Activated CD4-positive, alpha-beta memory T cell treated with anti-CD3 and anti-CD28 coated beads for 36 hours (primary cell): ENCODE measurements at regions of chr12 and their contacts with region 1.

Region 1: DNA sequence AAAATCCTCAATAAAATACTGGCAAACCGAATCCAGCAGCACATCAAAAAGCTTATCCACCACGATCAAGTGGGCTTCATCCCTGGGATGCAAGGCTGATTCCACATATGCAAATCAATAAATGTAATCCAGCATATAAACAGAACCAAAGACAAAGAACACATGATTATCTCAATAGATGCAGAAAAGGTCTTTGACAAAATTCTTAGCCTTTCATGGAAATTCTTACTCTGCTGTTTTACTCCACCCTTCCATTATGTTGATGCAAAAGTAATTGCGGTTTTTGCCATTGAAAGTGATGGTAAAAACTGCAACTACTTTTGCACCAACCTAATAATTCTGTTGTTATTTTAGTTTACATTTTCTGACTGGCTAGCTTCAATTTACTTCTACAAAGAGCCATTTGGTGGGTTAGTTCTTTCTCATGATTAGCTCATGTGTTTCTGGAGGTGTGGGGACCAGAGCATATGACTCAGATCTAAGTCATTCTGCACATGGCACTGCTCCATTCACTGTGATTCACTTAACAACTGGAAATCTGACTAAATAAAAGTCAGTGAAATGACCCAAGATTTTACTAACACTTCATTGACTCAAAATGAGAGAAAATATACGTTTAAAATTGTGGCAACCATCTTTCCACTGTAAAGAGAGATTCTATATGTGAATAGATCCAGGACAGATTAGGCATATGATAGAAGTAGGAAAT is 99.9 kb downstream of the TMTC3 start:
- DNase-seq: peak; percentile 54
- H3K4me3 Mint-ChIP-seq: no peak overlapping the region
- H3K27ac Mint-ChIP-seq: peak overlapping the region; percentile 83
- H3K4me1 Mint-ChIP-seq: peaks cover 35% of the 10 kb centered on the region
- H3K27me3 Mint-ChIP-seq: peaks cover 13% of the 10 kb centered on the region

Region 2: GRCh38 chr12:88156075-88156654 is 85.9 kb before region 1 on chr12:
- CTCF ChIA-PET with region 1: no interaction called
- POLR2A ChIA-PET with region 1: no interaction called
- intact Hi-C with region 1: loop called (anchors 5 kb)
- DNase-seq: no peak
- H3K4me3 Mint-ChIP-seq: no peak overlapping the region
- H3K27ac Mint-ChIP-seq: no peak overlapping the region
- H3K4me1 Mint-ChIP-seq: peaks cover 11% of the 10 kb centered on the region
- H3K27me3 Mint-ChIP-seq: no peaks in the 10 kb centered on the region

Region 3: DNA sequence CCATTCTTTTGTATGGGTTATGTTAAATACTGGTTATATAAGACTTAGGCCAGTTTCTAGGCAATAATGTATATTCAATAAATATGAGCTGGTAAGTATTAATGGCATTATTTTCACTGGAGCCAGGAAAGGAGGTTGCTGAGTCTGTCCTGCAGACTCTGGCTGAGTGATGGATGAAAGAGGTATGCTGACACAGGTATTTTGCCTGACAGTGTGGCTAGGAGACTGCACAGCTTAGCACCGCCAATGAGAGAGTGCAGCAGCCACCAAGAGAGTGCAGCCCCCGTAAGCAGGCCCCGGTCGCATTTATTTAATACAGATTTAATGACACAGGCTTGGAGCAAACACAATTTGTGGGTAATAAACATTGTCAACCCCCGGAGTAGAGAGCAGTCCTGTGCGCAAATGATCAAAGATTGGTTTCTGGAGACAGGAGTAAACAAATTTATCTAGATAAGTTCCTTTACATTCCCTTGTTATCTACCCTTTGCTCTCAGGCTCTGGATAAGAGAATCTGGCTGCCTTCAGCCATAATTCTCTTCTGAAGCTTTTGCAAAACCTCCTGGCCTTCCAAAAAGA is 62.5 kb before region 1 on chr12:
- CTCF ChIA-PET with region 1: no interaction called
- POLR2A ChIA-PET with region 1: interaction called, 6 read pairs
- intact Hi-C with region 1: loop called (anchors 5 kb)
- DNase-seq: no peak
- H3K4me3 Mint-ChIP-seq: no peak overlapping the region
- H3K27ac Mint-ChIP-seq: no peak overlapping the region
- H3K4me1 Mint-ChIP-seq: peaks cover 3% of the 10 kb centered on the region
- H3K27me3 Mint-ChIP-seq: no peaks in the 10 kb centered on the region

Region 4: DNA sequence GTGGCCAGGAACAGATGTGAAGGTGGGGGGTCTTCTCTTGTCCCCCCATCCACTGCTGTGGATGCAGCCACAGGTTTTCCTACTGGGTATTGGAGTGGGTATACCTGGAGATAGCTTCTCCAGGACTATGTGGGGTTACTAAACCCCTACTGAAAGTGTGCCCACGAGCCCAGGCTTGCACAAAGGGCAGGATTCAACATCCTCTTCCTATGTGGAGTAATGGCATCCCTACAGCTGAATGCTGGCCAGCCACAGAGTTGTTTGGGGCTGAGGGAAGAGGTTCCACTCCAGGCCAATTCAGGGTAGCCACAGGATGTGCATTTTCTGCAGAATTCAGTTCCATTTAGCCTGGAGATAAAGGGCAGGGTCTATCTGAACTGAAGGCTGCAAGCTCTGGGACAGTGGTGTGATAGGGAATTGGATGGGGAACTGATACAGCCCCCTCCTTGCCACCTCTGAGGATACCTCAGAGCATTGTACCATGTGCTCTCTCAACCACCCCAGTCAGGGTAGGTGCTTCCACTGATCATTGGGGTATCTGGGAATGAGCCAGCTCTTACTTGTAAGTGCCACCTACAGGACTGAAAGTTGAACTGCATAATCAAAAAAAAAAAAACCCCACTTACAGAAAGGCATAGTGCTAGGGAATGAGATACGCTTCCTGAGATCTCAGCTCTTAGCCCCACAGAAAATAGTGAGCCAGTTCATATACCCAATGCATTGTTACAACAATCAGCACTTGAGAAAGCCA is 151.2 kb after region 1 on chr12:
- CTCF ChIA-PET with region 1: no interaction called
- POLR2A ChIA-PET with region 1: no interaction called
- intact Hi-C with region 1: loop called (anchors 1 kb)
- DNase-seq: no peak
- H3K4me3 Mint-ChIP-seq: no peak overlapping the region
- H3K27ac Mint-ChIP-seq: no peak overlapping the region
- H3K4me1 Mint-ChIP-seq: peaks cover 5% of the 10 kb centered on the region
- H3K27me3 Mint-ChIP-seq: peaks cover 2% of the 10 kb centered on the region

Region 5: DNA sequence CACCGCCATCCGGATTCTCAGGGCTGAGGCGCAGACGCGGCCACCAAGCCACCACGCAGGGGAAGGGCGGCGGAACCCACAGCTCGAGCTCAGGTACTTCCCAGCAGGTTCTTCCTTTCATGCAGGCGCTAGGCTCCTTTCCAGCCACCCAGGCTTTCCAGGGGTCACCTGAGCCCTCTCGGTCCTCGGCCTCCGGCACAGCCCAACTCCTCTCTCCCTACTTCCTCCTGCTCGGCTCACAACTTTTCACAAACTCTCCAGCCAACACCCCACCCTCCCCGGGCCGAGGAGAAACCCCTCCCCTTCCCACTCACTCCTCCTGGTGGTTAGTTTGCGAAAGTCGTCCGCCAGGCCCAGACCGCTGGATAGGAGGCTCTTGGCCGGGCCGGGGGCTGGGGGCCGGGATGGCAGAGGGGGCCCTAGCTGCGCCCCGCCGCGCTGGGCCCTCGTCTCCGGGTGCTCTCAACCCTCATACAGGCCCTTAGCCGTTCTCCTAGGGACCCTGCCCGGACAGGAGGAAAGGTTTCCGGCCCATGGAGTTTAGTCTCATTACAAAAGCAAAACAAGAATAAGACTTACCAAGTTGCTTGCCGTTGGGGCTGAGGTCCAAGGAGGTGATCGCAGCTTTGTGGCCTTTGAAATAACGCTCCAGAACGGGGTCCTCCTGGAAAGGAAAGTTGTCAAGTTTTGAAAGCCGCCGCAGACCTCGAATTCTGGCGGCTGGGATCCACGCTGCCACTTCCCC is 1282.7 kb after region 1 on chr12 and contains the start of gene GALNT4:
- CTCF ChIA-PET with region 1: no interaction called
- POLR2A ChIA-PET with region 1: no interaction called
- intact Hi-C with region 1: loop called (anchors 5 kb)
- DNase-seq: peak; percentile 86
- H3K4me3 Mint-ChIP-seq: peak within 1 kb of the TSS; percentile 99
- H3K27ac Mint-ChIP-seq: peak within 1 kb of the TSS; percentile 98
- H3K4me1 Mint-ChIP-seq: peaks cover 45% of the 10 kb centered on the region
- H3K27me3 Mint-ChIP-seq: no peaks in the 10 kb centered on the region
- total RNA-seq, gene GALNT4: 5.8 to 6.0 TPM